OCI-LY7 (cell line): ENCODE measurements at regions of chr7 and their contacts with region 1.

Region 1: DNA sequence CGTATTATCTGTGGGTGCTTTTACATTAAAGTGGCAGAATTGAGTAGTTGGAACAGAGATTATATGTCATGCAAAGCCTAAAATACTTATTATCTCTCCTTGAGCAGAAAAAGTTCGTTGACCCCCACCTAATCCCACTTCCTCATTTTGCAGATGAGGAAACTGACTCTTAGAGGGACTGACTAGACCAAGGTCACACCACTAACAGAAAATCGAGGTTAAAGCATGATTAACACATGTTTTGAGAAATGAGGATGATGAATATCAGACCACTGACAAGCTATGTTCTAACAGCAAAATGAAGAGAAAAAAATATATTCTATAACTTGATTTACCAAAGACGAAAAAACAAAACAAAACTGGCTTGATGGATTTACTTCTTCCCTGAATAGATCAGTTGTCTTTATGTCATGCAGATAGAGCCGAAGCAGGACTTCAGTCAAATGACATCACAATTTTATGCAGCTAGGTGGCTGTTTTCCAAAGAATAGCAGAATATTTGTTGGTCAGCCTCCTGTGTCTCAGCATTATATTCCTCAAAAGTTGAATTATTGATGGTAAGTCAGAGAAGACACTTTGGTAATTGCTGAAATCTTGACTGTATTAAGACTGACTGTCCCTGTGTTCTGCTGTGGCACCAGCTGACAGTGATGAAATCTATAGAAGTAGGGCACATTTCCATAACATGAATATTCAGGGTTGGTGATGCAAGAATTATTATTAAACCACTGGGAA is 24.2 kb upstream of the SMIM30 start:
- DNase-seq: peak; percentile 85
- H3K4me3 ChIP-seq: peak overlapping the region; percentile 11
- H3K27ac ChIP-seq: peak overlapping the region; percentile 95
- H3K4me1 ChIP-seq: peaks cover 53% of the 10 kb centered on the region
- CTCF ChIP-seq: no peak

Region 2: GRCh38 chr7:112939574-112940314 is 202.8 kb before region 1 on chr7:
- CTCF ChIA-PET with region 1: no interaction called
- POLR2A ChIA-PET with region 1: interaction called, 5 read pairs
- intact Hi-C with region 1: loop called (anchors 2 kb)
- DNase-seq: peak; percentile 98
- H3K4me3 ChIP-seq: peak overlapping the region; percentile 83
- H3K27ac ChIP-seq: peak overlapping the region; percentile 57
- H3K4me1 ChIP-seq: peaks cover 24% of the 10 kb centered on the region
- CTCF ChIP-seq: no peak

Region 3: DNA sequence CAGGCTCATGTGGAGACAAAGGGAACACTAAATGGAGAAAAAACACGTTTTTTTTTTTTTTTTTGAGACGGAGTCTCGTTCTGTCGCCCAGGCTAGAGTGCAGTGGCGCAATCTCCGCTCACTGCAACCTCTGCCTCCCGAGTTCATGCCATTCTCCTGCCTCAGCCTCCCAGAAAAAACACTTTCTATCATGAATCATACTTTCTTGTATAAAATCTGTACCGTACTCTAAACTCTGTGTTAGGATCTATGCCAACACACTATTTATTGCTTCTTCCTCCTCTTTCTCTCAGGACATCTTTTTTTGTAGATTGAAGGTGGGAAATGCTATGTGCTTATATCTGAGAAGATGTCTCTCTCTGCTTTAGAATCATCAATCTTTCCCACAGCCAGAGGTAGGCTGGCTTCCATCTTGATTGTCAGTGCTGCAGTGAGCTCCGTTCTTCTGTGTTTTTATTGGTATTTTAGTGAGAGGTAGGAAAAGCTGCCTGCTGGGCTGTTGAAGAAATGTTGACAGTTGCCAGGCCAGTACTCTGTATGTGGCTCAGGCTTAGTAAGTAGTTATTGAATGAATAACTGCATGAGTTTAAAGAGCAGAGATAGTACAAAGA is 157.1 kb before region 1 on chr7:
- CTCF ChIA-PET with region 1: no interaction called
- POLR2A ChIA-PET with region 1: interaction called, 5 read pairs
- intact Hi-C with region 1: loop called (anchors 5 kb)
- DNase-seq: no peak
- H3K4me3 ChIP-seq: no peak overlapping the region
- H3K27ac ChIP-seq: no peak overlapping the region
- H3K4me1 ChIP-seq: peaks cover 42% of the 10 kb centered on the region
- CTCF ChIP-seq: no peak

Region 4: GRCh38 chr7:113128028-113128427 is 14.5 kb before region 1 on chr7:
- CTCF ChIA-PET with region 1: no interaction called
- POLR2A ChIA-PET with region 1: interaction called, 47 read pairs
- intact Hi-C with region 1: no loop called
- DNase-seq: no peak
- H3K4me3 ChIP-seq: no peak overlapping the region
- H3K27ac ChIP-seq: no peak overlapping the region
- H3K4me1 ChIP-seq: no peaks in the 10 kb centered on the region
- CTCF ChIP-seq: no peak